Activated T-helper 2 cell treated with anti-CD3 and anti-CD28 coated beads, Interferon-gamma antibody, Interleukin-2, Interleukin-4, amounts not matched to agents 10 μg/mL and 5 μg/mL and 100 μg/mL, durations not matched to agents 14 hours and 24 hours and 36 hours (primary cell): ENCODE measurements at regions of chr13 and their contacts with region 1.

Region 1: DNA sequence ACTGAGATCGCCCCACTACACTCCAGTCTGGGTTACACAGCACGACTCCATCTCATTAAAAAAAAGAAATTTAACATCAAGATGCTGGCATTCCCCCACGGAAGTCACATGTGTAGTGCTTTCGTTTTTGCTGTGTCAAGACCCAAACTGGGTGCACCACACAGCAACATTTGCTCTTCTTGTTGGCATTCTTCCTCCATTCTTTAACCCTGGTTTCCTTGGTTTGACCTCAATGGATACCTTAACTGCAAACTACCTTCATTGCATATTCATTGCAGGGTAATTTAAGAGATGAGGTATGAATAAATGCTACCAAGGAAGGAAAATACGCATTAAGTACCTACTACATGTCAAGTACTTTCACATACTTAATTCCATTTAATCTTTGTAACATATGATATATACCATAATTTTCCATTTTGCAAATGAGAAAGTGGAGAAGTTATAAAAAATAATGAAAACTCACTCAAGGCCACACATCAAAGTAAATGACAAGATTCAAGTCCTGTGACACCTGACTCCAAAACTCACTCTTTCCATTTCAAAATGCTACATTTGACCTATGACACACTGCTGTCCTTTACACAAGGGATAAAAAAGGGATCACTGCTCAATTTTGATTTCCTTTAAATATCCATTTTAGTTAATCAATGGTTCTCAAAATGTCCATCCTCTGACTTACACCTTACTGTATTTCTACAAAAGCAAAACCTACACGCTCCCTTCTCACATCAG is 59.2 kb downstream of the STK24 start:
- DNase-seq: no peak
- H3K4me3 Mint-ChIP-seq: peak overlapping the region; percentile 22
- H3K27ac Mint-ChIP-seq: peak overlapping the region; percentile 93
- H3K4me1 Mint-ChIP-seq: peaks cover 78% of the 10 kb centered on the region
- H3K27me3 Mint-ChIP-seq: no peaks in the 10 kb centered on the region

Region 2: DNA sequence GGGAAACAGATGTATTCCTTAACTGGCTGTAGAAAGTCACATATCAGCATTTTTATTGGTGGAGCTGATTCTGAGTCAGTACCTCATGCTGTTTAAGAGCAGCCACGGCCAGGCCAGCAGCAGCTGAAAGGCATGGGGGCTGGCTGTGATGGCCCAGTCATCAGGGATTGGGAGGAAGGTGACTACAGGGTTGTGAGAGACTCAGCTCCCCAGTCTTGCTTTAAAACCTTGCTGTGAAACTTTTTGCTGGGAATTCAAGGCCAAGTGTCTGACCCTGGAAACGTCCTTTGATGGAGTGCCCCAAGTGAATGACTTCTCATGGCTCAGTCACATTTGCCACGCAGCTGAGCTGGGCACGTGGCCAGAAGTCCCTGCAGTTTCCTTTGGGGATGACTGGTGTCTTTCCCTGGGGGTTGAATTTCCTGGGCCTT is 301.6 kb before region 1 on chr13:
- intact Hi-C with region 1: no loop called
- DNase-seq: no peak
- H3K4me3 Mint-ChIP-seq: no peak overlapping the region
- H3K27ac Mint-ChIP-seq: no peak overlapping the region
- H3K4me1 Mint-ChIP-seq: no peaks in the 10 kb centered on the region
- H3K27me3 Mint-ChIP-seq: peaks cover 2% of the 10 kb centered on the region

Region 3: GRCh38 chr13:98542568-98543377 is 25.0 kb after region 1 on chr13:
- intact Hi-C with region 1: loop called (anchors 2 kb)
- DNase-seq: no peak
- H3K4me3 Mint-ChIP-seq: peak overlapping the region; percentile 68
- H3K27ac Mint-ChIP-seq: peak overlapping the region; percentile 82
- H3K4me1 Mint-ChIP-seq: peaks cover 74% of the 10 kb centered on the region
- H3K27me3 Mint-ChIP-seq: no peaks in the 10 kb centered on the region

Region 4: GRCh38 chr13:98549728-98550317 is 32.1 kb after region 1 on chr13:
- intact Hi-C with region 1: loop called (anchors 2 kb)
- DNase-seq: no peak
- H3K4me3 Mint-ChIP-seq: no peak overlapping the region
- H3K27ac Mint-ChIP-seq: peak overlapping the region; percentile 66
- H3K4me1 Mint-ChIP-seq: peaks cover 49% of the 10 kb centered on the region
- H3K27me3 Mint-ChIP-seq: no peaks in the 10 kb centered on the region

Region 5: GRCh38 chr13:98576963-98577822 is 59.5 kb after region 1 on chr13 and contains the start of gene STK24:
- intact Hi-C with region 1: loop called (anchors 1 kb)
- DNase-seq: peak; percentile 60
- H3K4me3 Mint-ChIP-seq: peak within 1 kb of the TSS; percentile 98
- H3K27ac Mint-ChIP-seq: peak within 1 kb of the TSS; percentile 95
- H3K4me1 Mint-ChIP-seq: peaks cover 36% of the 10 kb centered on the region
- H3K27me3 Mint-ChIP-seq: no peaks in the 10 kb centered on the region
- total RNA-seq, gene STK24: 119 and 127 TPM in 2 replicates